ENCODE measurements at regions of chr7 and their contacts with region 1.

Region 1: GRCh38 chr7:149742075-149742701 is 31.2 kb downstream of the ZNF467 start:
- DNase-seq: peak; percentile 86
- CTCF ChIP-seq: peak; percentile 96

Region 2: DNA sequence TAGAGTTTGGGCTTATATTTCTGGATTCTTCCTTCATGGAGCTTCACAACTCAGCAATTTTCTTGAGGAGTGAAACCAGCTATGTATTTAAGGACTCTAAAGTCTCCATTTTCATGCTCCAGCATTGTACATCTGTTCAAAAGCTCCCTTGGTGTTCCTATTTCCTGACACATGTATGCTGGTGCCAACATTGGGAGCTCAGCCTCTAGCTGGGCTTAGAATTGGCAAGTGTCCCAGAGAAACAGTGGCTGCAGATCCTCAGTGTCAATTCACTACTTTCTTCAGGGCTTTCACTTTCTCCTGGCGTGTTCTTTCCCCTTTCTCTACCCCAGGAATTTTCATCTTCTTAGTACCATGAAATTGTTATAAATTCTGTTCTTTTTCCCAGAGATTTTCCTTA is 71.9 kb before region 1 on chr7:
- CTCF ChIA-PET with region 1: interaction called, 251 read pairs
- POLR2A ChIA-PET with region 1: no interaction called
- DNase-seq: no peak
- CTCF ChIP-seq: no peak

Region 3: DNA sequence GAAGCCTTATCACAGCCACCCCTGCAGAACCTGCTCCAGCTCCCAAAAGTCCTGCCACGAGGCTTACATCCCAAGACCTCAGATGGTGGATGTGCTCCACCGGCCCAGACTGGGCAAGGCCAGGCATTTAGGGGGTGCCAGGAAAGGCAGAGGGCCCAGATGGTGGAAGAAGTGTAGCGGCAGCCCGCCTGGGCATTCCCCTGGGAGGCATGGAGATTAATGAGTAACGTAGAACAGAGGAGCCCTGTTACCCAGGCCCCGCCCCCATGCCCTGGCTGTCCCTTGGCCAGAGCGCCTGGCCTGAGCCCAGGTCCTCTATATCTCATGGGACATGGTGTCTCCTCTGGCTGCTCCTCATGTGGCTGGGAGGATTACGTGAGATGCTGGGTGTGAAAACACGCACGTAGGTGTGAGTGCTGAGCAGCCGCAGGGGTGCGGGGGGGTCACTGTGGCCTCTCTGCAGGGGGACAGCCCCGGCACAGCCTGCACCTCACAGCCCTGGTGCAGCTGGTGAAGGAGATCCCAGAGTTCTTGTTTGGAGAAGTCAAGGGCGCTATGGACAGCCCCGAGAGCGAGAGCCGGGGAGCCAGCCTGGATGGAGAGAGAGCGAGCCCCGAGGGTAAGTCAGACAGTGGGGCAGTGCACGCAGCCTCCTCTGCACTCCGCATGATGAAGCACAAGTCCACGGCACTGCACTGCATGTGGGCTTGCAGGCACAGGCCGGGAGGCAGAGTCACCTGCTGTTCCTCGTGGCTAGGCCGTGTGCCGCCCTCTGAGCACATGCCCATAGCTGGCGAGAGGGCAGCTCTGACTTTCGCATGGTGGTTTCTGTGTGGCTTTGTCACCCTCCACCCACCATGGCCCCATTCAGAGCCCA is 21.6 kb before region 1 on chr7:
- CTCF ChIA-PET with region 1: interaction called, 19 read pairs
- POLR2A ChIA-PET with region 1: no interaction called
- DNase-seq: peak; percentile 51
- CTCF ChIP-seq: no peak

Region 4: GRCh38 chr7:149729983-149730801 is 12.0 kb before region 1 on chr7:
- CTCF ChIA-PET with region 1: interaction called, 45 read pairs
- POLR2A ChIA-PET with region 1: no interaction called
- DNase-seq: no peak
- CTCF ChIP-seq: no peak

Region 5: DNA sequence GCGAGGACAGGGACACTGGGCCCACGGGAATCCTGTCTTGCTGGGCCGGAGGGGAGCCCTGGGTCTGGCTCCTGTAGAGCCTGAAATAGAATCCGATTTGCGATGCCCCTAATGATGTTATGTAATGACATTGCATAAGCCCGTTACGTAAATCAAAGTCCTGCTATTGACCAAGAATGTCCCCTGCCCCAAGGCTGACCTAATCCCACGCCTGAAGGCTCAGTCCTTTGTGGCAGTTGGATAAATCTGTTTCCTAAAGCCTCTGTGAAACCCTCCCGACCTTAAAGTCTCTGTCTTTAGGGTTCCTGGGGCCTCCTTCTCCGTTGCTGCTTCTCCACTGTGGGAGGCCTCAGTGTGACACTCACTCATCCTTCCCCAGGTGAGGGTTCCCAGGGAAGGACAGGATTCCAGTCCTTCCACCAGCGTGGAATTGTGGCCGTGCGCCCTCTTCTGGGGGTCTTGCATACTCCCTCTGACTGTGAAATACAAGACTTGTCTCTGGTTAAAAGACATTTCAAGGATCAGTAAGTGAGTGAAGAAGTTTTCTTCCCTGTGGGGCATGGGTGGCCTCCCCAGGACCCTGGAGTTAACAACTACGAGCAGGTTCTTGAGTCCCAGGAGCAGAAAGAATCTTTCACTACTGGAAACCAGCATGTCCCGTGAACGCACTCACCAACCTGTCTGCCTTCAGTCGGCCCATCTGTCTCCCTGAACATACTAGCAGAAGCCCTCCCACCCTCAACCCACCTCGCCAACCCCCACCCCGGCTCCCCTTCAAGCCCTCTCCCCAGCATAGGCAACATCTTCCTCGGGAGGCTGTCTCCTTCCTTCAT is 11.4 kb after region 1 on chr7:
- CTCF ChIA-PET with region 1: interaction called, 20 read pairs
- POLR2A ChIA-PET with region 1: no interaction called
- DNase-seq: no peak
- CTCF ChIP-seq: peak; percentile 21

Region 6: DNA sequence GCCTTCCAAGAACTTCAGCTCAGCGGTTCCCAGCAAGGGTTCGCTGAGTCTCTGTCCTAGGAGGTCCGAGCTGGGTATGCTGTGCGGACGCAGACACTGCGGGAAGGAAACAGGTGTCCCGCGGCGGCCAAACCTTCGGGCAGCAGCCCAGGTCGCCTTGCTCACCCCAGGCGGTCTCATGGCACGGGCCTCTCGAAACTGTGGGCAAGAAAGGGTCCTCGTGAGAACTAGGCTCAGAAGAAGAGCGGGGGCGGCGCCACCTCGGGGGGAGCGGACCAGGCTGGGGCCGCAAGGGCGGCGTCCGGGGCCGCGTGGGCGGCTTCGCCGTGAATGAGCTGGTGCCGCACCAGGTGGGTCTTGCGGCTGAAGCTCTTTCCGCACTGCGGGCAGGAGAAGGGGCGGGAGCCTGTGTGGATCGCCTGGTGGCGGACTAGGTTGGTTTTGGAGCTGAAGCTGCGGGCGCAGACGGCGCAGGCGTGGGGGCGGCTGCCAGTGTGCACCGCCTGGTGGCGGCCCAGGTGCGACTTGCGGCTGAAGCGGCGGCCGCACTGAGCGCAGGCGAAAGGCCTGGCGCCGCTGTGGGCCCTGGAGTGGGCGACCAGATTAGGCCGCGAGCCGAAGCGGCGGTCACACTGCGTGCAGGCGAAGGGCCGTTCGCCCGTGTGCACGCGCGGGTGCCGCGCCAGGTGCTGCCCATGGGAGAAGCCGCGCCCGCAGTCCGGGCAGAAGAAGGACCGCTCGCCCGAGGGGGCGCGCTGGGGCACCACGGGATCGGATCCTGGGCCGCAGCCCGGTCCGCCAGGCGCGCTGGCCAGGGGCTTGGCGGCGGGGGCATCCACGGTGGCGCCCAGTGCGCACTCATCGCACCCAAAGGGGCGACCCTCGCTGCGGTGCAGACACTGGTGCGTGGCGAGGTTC is 22.6 kb after region 1 on chr7:
- CTCF ChIA-PET with region 1: interaction called, 11 read pairs
- POLR2A ChIA-PET with region 1: no interaction called
- DNase-seq: no peak
- CTCF ChIP-seq: no peak

Measured in GM10248 (cell line).